ENCODE measurements at regions of chr1 and their contacts with region 1.

Region 1: GRCh38 chr1:171313835-171314320 is at the start of gene FMO4:
- DNase-seq: peak; percentile 72
- H3K4me3 ChIP-seq: peak within 1 kb of the TSS in 3 of 4 donors; percentile 25 to 54 (median 30)
- H3K27ac ChIP-seq: peak within 1 kb of the TSS; percentile 66 to 80 (median 78)
- H3K4me1 ChIP-seq: peaks cover 0 to 20% (median 9%) of the 10 kb centered on the region in 3 donors
- H3K27me3 ChIP-seq: no peaks in the 10 kb centered on the region
- CTCF ChIP-seq: peak; percentile 66 to 95 (median 88)
- POLR2A ChIP-seq: peak in 1 of 4 donors; percentile 29
- total RNA-seq, gene FMO4: 1.3 to 9.1 (median 4.6) TPM

Region 2: GRCh38 chr1:171210355-171210754 is 103.5 kb before region 1 on chr1:
- intact Hi-C with region 1: no loop called
- DNase-seq: no peak
- H3K4me3 ChIP-seq: no peak overlapping the region
- H3K27ac ChIP-seq: peak overlapping the region in 2 of 4 donors; percentile 12 to 16
- H3K4me1 ChIP-seq: peaks cover 0 to 11% (median 0%) of the 10 kb centered on the region in 3 donors
- H3K27me3 ChIP-seq: no peaks in the 10 kb centered on the region
- CTCF ChIP-seq: no peak
- POLR2A ChIP-seq: no peak

Region 3: GRCh38 chr1:171245458-171246064 is 68.3 kb before region 1 on chr1:
- intact Hi-C with region 1: loop called (anchors 10 kb)
- DNase-seq: no peak
- H3K4me3 ChIP-seq: no peak overlapping the region
- H3K27ac ChIP-seq: no peak overlapping the region
- H3K4me1 ChIP-seq: no peaks in the 10 kb centered on the region
- H3K27me3 ChIP-seq: no peaks in the 10 kb centered on the region
- CTCF ChIP-seq: peak; percentile 40 to 69 (median 62)
- POLR2A ChIP-seq: no peak